GM23248 (cell line): ENCODE measurements at regions of chr17 and their contacts with region 1.

Region 1: GRCh38 chr17:8409966-8410864 is 12.6 kb upstream of the RNF222 start:
- DNase-seq: peak; percentile 93
- H3K4me3 ChIP-seq: no peak overlapping the region
- H3K27ac ChIP-seq: no peak overlapping the region
- H3K4me1 ChIP-seq: peaks cover 7% of the 10 kb centered on the region; the same call in 1 of the 2 replicates
- H3K27me3 ChIP-seq: no peaks in the 10 kb centered on the region

Region 2: GRCh38 chr17:8753976-8754440 is 343.8 kb after region 1 on chr17:
- in situ Hi-C with region 1: loop called (anchors 10 kb)
- DNase-seq: peak; percentile 59
- H3K4me3 ChIP-seq: no peak overlapping the region
- H3K27ac ChIP-seq: no peak overlapping the region
- H3K4me1 ChIP-seq: no peaks in the 10 kb centered on the region
- H3K27me3 ChIP-seq: peaks cover 12% of the 10 kb centered on the region